Colonic mucosa (tissue), 4 donors: ENCODE measurements at regions of chr3 and their contacts with region 1.

Region 1: GRCh38 chr3:4350789-4351163 is 47.6 kb downstream of the SETMAR start:
- DNase-seq: peak; percentile 50
- H3K4me3 ChIP-seq: no peak overlapping the region
- H3K27ac ChIP-seq: no peak overlapping the region
- H3K4me1 ChIP-seq: no peaks in the 10 kb centered on the region
- H3K27me3 ChIP-seq: no peaks in the 10 kb centered on the region
- CTCF ChIP-seq: peak; percentile 69

Region 2: GRCh38 chr3:4584456-4585249 is 233.9 kb after region 1 on chr3:
- intact Hi-C with region 1: loop called (anchors 5 kb)
- DNase-seq: no peak
- H3K4me3 ChIP-seq: no peak overlapping the region
- H3K27ac ChIP-seq: peak overlapping the region; percentile 60
- H3K4me1 ChIP-seq: no peaks in the 10 kb centered on the region
- H3K27me3 ChIP-seq: no peaks in the 10 kb centered on the region
- CTCF ChIP-seq: no peak

Region 3: DNA sequence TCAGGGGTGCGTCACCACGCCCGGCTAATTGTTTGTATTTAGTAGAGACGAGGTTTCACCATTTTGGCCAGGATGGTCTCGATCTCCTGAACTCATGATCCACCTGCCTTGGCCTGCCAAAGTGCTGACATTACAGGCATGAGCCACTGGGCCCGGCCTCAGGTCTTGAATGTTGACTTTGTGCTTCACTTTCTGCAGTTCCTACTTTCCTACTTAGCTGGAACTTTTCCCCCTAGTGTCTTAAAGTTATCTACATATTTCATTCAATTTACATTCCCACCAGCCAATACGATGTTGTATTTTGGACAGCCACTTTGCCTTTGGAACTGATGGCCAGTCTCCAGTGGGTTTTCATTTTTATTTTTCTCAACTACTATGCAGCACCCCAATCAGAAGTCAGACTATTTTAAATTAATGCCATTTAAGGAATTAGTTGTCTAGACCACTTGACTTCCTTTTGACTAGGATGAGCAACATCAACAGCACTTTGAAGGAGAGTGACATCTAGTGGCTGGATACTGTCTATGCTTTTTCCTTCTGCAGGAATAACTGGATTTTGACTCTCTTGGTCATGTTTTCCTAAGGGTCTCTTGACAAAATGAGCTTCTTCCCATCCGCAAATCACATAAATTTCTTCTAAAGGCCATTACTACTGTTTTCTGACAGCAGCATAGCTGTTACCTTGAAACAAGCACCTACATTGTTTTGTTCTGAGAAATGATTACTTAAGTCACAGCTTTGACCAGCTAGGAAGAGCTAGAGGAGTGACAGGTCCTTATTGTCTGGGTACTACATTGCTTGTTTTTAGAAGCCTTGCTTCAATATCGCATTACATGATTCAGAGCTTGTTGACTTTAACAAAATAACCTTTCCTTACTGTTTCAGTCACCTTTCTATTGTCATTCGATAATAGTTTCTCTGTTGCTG is 282.6 kb after region 1 on chr3:
- intact Hi-C with region 1: loop called (anchors 5 kb)
- DNase-seq: no peak
- H3K4me3 ChIP-seq: no peak overlapping the region
- H3K27ac ChIP-seq: no peak overlapping the region
- H3K4me1 ChIP-seq: no peaks in the 10 kb centered on the region
- H3K27me3 ChIP-seq: no peaks in the 10 kb centered on the region
- CTCF ChIP-seq: peak; percentile 85